PC-3 (cell line): ENCODE measurements at regions of chr14 and their contacts with region 1.

Region 1: GRCh38 chr14:47917345-47917954 is 242.0 kb upstream of the MDGA2 start:
- DNase-seq: peak; percentile 77
- ATAC-seq: peak; percentile 29
- H3K4me3 ChIP-seq: no peak overlapping the region
- H3K27ac ChIP-seq: no peak overlapping the region
- H3K4me1 ChIP-seq: no peaks in the 10 kb centered on the region
- H3K27me3 ChIP-seq: peaks cover 20% of the 10 kb centered on the region; the same call in 1 of the 2 replicates
- CTCF ChIP-seq: peak; percentile 90

Region 2: DNA sequence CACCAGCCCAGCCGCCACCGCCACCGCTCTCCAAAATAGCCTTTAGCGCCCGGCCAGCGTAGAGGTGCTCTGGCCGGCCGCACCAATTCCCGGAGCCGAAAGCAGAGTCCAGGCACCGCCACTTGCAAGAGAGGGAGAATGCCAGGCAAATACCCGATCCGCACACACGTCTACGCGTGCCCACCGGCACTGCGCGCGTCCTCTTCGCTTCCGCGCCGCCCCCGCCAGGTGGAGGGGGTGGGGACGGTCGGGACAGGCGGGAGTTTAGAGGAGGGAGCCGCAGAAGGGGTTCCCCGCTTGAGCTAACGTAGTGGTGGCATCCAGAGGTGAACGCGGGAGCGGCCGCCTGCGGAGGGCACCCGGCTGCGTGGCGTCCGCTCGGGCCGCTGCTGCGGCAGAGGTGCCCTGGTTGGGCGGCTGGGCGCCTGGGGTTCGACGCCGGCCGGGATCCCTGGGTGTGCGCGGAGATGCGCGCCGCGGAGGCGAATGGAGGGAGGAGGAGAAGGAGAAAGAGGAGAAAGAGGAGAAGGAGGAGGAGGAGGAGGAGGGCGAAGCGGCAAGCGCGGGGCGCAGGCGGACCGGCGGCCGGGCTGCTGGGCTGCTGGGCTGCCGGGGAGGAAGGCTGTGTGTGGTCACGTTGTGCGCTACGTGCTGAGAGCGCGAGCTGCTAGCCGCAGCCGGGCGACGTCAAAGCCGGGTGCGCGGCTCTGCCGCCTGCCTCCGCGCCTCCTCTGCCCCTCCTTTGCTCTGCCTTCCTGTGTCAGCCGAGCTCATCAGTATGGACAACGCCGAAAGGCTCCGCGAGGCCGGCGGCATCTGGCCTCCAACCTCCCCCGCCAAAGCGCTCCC is 241.8 kb before region 1 on chr14 and contains the start of gene MDGA2:
- CTCF ChIA-PET with region 1: no interaction called
- POLR2A ChIA-PET with region 1: no interaction called
- intact Hi-C with region 1: loop called (anchors 10 kb)
- DNase-seq: no peak
- ATAC-seq: no peak
- H3K4me3 ChIP-seq: no peak within 1 kb of the TSS
- H3K27ac ChIP-seq: no peak within 1 kb of the TSS
- H3K4me1 ChIP-seq: no peaks in the 10 kb centered on the region
- H3K27me3 ChIP-seq: peaks cover 26% of the 10 kb centered on the region
- CTCF ChIP-seq: no peak
- total RNA-seq, gene MDGA2: 0.04 and 0.17 TPM in 2 replicates

Region 3: DNA sequence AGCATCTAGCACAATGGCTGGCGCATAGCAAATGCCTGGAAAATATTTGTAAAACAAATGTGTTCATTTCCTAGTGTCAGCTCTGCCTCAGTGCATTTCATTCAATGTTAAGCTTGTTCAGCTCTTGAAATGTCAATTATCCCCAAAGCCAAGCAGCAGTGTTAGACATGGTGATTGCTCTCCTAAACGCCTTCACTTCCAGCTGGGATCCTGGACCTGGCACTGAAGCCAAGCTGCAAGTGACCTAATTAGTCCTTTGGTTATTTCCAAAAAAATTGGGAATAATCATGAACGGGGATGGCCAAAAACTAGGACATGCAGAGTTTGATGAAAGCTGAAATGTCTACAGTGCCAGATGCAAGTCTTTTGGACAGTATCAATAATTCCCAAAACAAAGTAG is 187.2 kb before region 1 on chr14:
- CTCF ChIA-PET with region 1: no interaction called
- POLR2A ChIA-PET with region 1: no interaction called
- intact Hi-C with region 1: no loop called
- DNase-seq: no peak
- ATAC-seq: no peak
- H3K4me3 ChIP-seq: no peak overlapping the region
- H3K27ac ChIP-seq: no peak overlapping the region
- H3K4me1 ChIP-seq: no peaks in the 10 kb centered on the region
- H3K27me3 ChIP-seq: no peaks in the 10 kb centered on the region
- CTCF ChIP-seq: no peak

Region 4: DNA sequence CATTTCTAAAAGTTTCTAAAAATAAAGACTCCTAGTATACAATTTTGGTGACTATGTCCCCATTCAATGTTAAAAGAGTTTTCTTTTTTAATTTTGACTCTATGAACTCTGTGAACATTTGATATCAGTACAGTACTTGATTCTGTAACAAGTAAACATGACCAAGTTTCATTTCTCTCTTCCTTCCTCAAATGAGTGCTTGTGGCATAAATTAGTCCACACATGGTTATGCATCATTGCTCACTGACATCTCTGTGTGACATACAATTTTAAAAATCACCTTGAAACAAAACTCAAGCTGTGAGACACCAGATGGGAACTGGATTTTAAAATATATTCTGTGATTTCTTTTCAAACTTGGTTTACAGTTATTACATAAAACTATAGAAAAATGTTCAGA is 11.9 kb after region 1 on chr14:
- CTCF ChIA-PET with region 1: no interaction called
- POLR2A ChIA-PET with region 1: no interaction called
- intact Hi-C with region 1: no loop called
- DNase-seq: no peak
- ATAC-seq: no peak
- H3K4me3 ChIP-seq: no peak overlapping the region
- H3K27ac ChIP-seq: no peak overlapping the region
- H3K4me1 ChIP-seq: no peaks in the 10 kb centered on the region
- H3K27me3 ChIP-seq: peaks cover 14% of the 10 kb centered on the region
- CTCF ChIP-seq: no peak

Region 5: GRCh38 chr14:48398675-48399282 is 481.3 kb after region 1 on chr14:
- CTCF ChIA-PET with region 1: no interaction called
- POLR2A ChIA-PET with region 1: no interaction called
- intact Hi-C with region 1: loop called (anchors 1 kb)
- DNase-seq: peak; percentile 86
- ATAC-seq: peak; percentile 77
- H3K4me3 ChIP-seq: no peak overlapping the region
- H3K27ac ChIP-seq: no peak overlapping the region
- H3K4me1 ChIP-seq: no peaks in the 10 kb centered on the region
- H3K27me3 ChIP-seq: peaks cover 10% of the 10 kb centered on the region; the same call in 1 of the 2 replicates
- CTCF ChIP-seq: peak; percentile 96

Region 6: DNA sequence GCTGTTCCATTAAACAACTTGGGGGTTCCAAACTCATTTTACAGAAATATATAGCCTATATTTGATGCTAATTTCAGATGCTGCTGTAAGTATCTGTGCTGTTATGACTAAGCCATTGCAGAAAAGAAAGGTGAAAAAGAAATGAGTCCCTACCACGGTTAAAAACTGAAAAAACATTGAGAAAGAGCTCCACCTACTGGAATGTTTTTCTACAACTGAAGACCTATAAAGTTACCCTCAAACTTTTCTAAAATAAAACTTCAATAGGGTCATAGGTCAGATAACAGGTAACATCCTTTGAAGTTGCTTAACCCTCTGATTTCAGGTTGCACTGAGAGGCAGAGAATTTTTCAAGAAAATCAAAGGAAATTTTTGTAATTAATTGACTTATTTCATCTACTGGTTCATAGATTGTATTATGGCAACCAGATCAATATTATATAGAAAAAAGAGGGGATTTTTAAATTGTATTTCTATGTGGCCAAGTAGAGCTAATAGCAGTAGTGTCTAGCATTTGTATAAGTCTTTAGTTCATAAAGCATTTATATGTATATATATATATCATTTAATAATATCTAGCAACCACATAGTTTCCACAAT is 1388.8 kb after region 1 on chr14:
- CTCF ChIA-PET with region 1: no interaction called
- POLR2A ChIA-PET with region 1: no interaction called
- intact Hi-C with region 1: loop called (anchors 10 kb)
- DNase-seq: peak; percentile 70
- ATAC-seq: peak; percentile 49; the same call in 1 of the 2 replicates
- H3K4me3 ChIP-seq: no peak overlapping the region
- H3K27ac ChIP-seq: no peak overlapping the region
- H3K4me1 ChIP-seq: no peaks in the 10 kb centered on the region
- H3K27me3 ChIP-seq: peaks cover 30% of the 10 kb centered on the region
- CTCF ChIP-seq: peak; percentile 80

Region 7: DNA sequence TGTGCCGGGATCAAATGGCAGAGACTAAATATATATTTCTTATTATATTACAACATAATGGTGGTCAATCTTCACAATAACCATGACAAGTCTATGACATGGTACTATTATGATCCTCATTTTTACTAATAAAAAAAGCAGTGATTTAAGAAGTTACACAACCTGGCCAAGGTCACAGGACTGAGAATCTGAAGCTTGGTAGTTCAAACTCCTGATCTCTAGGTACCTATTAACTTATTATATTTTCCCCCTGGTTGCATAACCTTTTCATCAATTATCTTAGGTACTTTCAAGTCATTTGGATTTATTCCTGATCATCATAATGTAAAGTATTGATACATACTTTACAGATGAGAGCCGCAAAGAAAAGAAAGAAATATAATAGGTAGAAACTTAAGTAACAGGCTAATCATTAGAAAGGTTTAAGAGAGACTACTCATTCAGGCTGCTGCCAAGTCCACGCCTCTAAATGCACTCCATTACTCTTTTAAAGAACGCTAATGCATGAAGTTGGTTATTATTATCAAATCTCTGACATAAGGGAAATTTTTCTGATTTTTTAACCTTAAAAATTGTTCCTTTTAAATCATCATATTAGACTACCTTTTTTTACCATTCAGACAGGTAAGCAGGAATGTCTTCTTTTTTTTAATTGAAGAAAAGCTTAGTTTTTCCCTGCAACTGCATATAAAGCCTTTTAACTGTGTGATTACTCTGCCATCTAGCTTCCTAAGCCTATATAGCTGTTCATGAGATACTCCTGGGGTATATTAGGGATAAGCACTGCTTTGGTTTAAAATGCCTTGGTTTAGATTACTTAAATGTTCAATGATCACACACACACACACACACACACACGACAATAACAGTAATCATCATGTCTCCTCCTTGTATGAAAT is 1633.1 kb after region 1 on chr14:
- CTCF ChIA-PET with region 1: no interaction called
- POLR2A ChIA-PET with region 1: no interaction called
- intact Hi-C with region 1: loop called (anchors 5 kb)
- DNase-seq: peak; percentile 73
- ATAC-seq: peak; percentile 75
- H3K4me3 ChIP-seq: no peak overlapping the region
- H3K27ac ChIP-seq: no peak overlapping the region
- H3K4me1 ChIP-seq: peaks cover 10% of the 10 kb centered on the region
- H3K27me3 ChIP-seq: no peaks in the 10 kb centered on the region
- CTCF ChIP-seq: peak; percentile 88